OCI-LY7 (cell line): ENCODE measurements at regions of chr1 and their contacts with region 1.

Region 1: GRCh38 chr1:194618101-194618500 is 1431.7 kb upstream of the B3GALT2 start:
- DNase-seq: no peak
- H3K4me3 ChIP-seq: no peak overlapping the region
- H3K27ac ChIP-seq: no peak overlapping the region
- H3K4me1 ChIP-seq: no peaks in the 10 kb centered on the region
- CTCF ChIP-seq: no peak

Region 2: DNA sequence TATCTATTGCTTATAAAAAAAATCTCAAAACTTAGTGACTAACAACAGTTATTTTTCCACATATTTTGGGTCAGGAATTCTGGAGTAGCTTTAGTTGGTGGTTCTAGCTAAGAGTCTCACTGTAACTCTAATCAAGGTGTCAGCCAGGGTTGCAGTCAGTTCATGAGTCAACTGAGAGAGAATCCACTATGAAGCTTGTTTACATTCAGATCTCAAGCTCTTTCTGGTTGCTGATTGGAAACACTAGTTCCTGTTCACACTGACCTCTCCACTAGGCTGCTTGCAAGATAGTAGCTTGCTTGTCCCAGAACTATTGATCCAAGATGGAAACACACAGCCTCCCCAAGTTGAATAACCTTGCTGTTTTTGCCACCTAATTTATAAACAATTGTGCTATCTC is 239.6 kb before region 1 on chr1:
- CTCF ChIA-PET with region 1: no interaction called
- POLR2A ChIA-PET with region 1: no interaction called
- intact Hi-C with region 1: loop called (anchors 10 kb)
- DNase-seq: no peak
- H3K4me3 ChIP-seq: no peak overlapping the region
- H3K27ac ChIP-seq: no peak overlapping the region
- H3K4me1 ChIP-seq: no peaks in the 10 kb centered on the region
- CTCF ChIP-seq: no peak

Region 3: GRCh38 chr1:194795917-194796593 is 178.0 kb after region 1 on chr1:
- CTCF ChIA-PET with region 1: no interaction called
- POLR2A ChIA-PET with region 1: no interaction called
- intact Hi-C with region 1: no loop called
- DNase-seq: no peak
- H3K4me3 ChIP-seq: no peak overlapping the region
- H3K27ac ChIP-seq: no peak overlapping the region
- H3K4me1 ChIP-seq: no peaks in the 10 kb centered on the region
- CTCF ChIP-seq: no peak